ENCODE measurements at regions of chr2 and their contacts with region 1.

Region 1: GRCh38 chr2:241686649-241687425 is at the start of gene DTYMK:
- DNase-seq: peak; percentile 94
- ATAC-seq: peak; percentile 95
- H3K4me3 ChIP-seq: peak within 1 kb of the TSS; percentile 92 to 96 (median 94)
- H3K27ac ChIP-seq: peak within 1 kb of the TSS; percentile 95
- H3K4me1 ChIP-seq: peaks cover 28% of the 10 kb centered on the region
- H3K27me3 ChIP-seq: no peaks in the 10 kb centered on the region; a peak in 1 of 5 replicates
- CTCF ChIP-seq: peak; percentile 4; the same call in 1 of the 2 replicates
- EP300 ChIP-seq: 0 out of 4 replicates have a peak, but pooled peaks of 1 of the 2 experiments have one; percentile 34
- POLR2A ChIP-seq: peak; percentile 92
- RAD21 ChIP-seq: peak; percentile 81
- total RNA-seq, gene DTYMK: 124 and 134 TPM in 2 replicates

Region 2: DNA sequence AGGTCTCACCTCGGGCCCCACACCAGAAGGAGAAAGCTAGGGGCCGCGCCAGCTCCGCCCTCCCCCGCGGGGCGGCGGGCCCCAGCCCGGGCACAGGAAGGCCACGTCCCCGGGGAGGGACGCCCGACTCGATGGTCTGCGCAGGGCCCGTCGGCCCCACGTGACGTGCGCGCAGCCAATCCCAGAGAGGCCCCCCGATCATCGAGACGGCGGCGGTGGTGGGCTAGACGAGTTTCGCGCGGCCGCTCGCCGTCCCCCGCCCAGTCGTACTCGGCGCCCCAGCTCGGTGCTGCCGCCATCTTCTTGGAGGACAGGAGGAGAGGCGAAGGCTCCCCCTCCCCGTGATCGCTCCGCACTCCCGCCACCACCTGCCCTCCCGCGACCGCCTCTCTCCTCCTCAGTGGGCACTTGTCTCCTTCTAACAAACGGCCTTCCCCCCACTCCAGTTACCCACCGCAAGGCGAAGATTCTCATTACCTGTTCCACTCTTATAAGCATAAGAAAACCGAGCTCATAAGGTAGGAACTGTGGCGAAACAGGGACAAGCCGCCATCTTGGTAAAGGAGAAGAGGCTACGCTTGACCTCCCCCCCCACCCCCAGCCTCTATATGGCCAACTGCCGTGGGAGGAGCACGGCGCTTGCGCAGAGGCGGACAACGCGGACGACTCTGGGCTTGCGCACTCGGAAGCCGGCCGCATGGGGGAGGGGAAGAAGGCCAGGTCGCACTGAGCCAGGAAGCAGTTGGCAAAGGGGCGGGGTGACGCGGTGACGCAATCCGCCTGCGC is 371.6 kb before region 1 on chr2 and contains the start of gene HDLBP:
- CTCF ChIA-PET with region 1: no interaction called
- POLR2A ChIA-PET with region 1: interaction called, 10 read pairs
- in situ Hi-C with region 1: no loop called
- intact Hi-C with region 1: no loop called
- DNase-seq: peak; percentile 98
- ATAC-seq: peak; percentile 90
- H3K4me3 ChIP-seq: peak within 1 kb of the TSS; percentile 92 to 96 (median 96)
- H3K27ac ChIP-seq: peak within 1 kb of the TSS; percentile 97
- H3K4me1 ChIP-seq: peaks cover 75% of the 10 kb centered on the region
- H3K27me3 ChIP-seq: no peaks in the 10 kb centered on the region; a peak in 1 of 5 replicates
- CTCF ChIP-seq: peak; percentile 96
- EP300 ChIP-seq: peak in 1 of 2 experiments; percentile 36; a peak in 3 of 4 replicates
- POLR2A ChIP-seq: peak; percentile 65 to 84; a peak in 3 of 4 replicates
- RAD21 ChIP-seq: no peak; the same call in 1 of the 2 replicates
- total RNA-seq, gene HDLBP: 707 and 912 TPM in 2 replicates

Region 3: GRCh38 chr2:241649404-241649803 is 37.4 kb before region 1 on chr2:
- CTCF ChIA-PET with region 1: no interaction called
- POLR2A ChIA-PET with region 1: interaction called, 30 read pairs
- in situ Hi-C with region 1: no loop called
- intact Hi-C with region 1: loop called (anchors 5 kb)
- DNase-seq: no peak
- ATAC-seq: no peak
- H3K4me3 ChIP-seq: no peak overlapping the region
- H3K27ac ChIP-seq: no peak overlapping the region
- H3K4me1 ChIP-seq: peaks cover 78% of the 10 kb centered on the region
- H3K27me3 ChIP-seq: no peaks in the 10 kb centered on the region
- CTCF ChIP-seq: no peak
- EP300 ChIP-seq: no peak
- POLR2A ChIP-seq: no peak
- RAD21 ChIP-seq: no peak

Region 4: DNA sequence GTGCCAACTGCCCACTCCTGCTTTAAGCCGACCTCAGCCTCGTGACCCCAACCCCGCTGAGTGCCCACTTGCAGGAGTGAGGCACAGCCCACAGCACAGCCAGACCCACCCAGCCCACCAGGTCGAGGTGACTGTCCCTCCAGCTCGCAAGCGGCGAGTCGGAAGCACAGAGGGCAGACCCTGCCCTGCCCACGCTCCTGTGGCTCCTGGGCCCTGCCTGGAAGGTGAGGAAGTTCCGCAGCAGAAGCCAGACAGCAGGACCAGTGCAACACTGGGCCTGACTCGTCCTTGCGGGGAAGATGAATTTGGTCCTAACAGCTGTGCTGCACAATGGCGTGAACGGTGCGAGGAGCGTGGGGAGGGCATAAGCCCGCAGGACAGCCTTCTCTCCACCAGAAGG is 10.2 kb before region 1 on chr2:
- CTCF ChIA-PET with region 1: no interaction called
- POLR2A ChIA-PET with region 1: interaction called, 13 read pairs
- in situ Hi-C with region 1: no loop called
- intact Hi-C with region 1: no loop called
- DNase-seq: no peak
- ATAC-seq: peak; percentile 1; the same call in 2 of the 3 replicates
- H3K4me3 ChIP-seq: no peak overlapping the region
- H3K27ac ChIP-seq: no peak overlapping the region
- H3K4me1 ChIP-seq: no peaks in the 10 kb centered on the region
- H3K27me3 ChIP-seq: no peaks in the 10 kb centered on the region
- CTCF ChIP-seq: no peak
- EP300 ChIP-seq: no peak
- POLR2A ChIP-seq: no peak; a peak in 1 of 4 replicates
- RAD21 ChIP-seq: no peak

Region 5: GRCh38 chr2:241734467-241735208 is 47.8 kb after region 1 on chr2 and contains the start of gene D2HGDH:
- CTCF ChIA-PET with region 1: no interaction called
- POLR2A ChIA-PET with region 1: interaction called, 30 read pairs
- in situ Hi-C with region 1: no loop called
- intact Hi-C with region 1: no loop called
- DNase-seq: peak; percentile 80
- ATAC-seq: peak; percentile 81
- H3K4me3 ChIP-seq: peak within 1 kb of the TSS; percentile 80 to 100 (median 96)
- H3K27ac ChIP-seq: peak within 1 kb of the TSS; percentile 91
- H3K4me1 ChIP-seq: peaks cover 28% of the 10 kb centered on the region
- H3K27me3 ChIP-seq: no peaks in the 10 kb centered on the region; a peak in 2 of 5 replicates
- CTCF ChIP-seq: no peak
- EP300 ChIP-seq: peak in 1 of 2 experiments; percentile 4; a peak in 1 of 4 replicates
- POLR2A ChIP-seq: peak in 1 of 2 experiments; percentile 75; a peak in 1 of 4 replicates
- RAD21 ChIP-seq: peak; percentile 64
- total RNA-seq, gene D2HGDH: 10.2 and 20.3 TPM in 2 replicates

Region 6: GRCh38 chr2:241810307-241811210 is 123.7 kb after region 1 on chr2:
- CTCF ChIA-PET with region 1: no interaction called
- POLR2A ChIA-PET with region 1: interaction called, 10 read pairs
- in situ Hi-C with region 1: no loop called
- intact Hi-C with region 1: no loop called
- DNase-seq: no peak
- ATAC-seq: no peak
- H3K4me3 ChIP-seq: peak overlapping the region; percentile 73 to 85 (median 81)
- H3K27ac ChIP-seq: peak overlapping the region; percentile 84
- H3K4me1 ChIP-seq: peaks cover 36% of the 10 kb centered on the region
- H3K27me3 ChIP-seq: no peaks in the 10 kb centered on the region; a peak in 1 of 5 replicates
- CTCF ChIP-seq: no peak
- EP300 ChIP-seq: no peak
- POLR2A ChIP-seq: no peak
- RAD21 ChIP-seq: no peak

Measured in HepG2 (cell line).